Activated naive CD4-positive, alpha-beta T cell treated with anti-CD3 and anti-CD28 coated beads for 36 hours (primary cell): ENCODE measurements at regions of chr12 and their contacts with region 1.

Region 1: GRCh38 chr12:106819991-106820390 is 45.5 kb downstream of the RIC8B start:
- DNase-seq: no peak
- H3K4me3 Mint-ChIP-seq: no peak overlapping the region
- H3K27ac Mint-ChIP-seq: no peak overlapping the region
- H3K4me1 Mint-ChIP-seq: peaks cover 12% of the 10 kb centered on the region
- H3K27me3 Mint-ChIP-seq: no peaks in the 10 kb centered on the region

Region 2: DNA sequence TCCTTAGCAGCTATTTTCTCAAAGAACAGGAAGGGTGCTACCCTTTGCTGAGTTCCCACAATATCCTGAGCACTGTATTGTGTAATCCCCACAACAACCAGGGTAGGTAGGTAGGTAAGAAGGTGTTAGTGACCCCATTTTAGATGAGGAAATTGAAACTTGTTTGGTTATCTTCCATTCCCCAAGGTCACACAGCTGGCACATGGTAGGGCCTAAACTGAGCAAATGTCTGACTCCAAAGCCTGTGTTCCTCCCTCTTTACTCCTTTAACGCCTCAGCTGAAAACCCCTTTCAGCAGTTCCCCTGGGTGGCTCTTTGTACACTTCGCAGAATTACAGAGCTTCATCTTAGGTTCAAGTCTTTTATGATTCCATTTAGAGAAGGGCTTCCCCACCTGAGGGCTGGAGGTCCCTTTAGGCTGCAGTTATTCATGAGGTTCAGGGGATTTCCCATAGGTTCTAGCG is 72.0 kb before region 1 on chr12:
- CTCF ChIA-PET with region 1: no interaction called
- intact Hi-C with region 1: loop called (anchors 1 kb)
- DNase-seq: peak; percentile 63
- H3K4me3 Mint-ChIP-seq: peak overlapping the region; percentile 12
- H3K27ac Mint-ChIP-seq: peak overlapping the region; percentile 90
- H3K4me1 Mint-ChIP-seq: peaks cover 32% of the 10 kb centered on the region
- H3K27me3 Mint-ChIP-seq: no peaks in the 10 kb centered on the region